Transverse colon (tissue), 4 donors: ENCODE measurements at regions of chr12 and their contacts with region 1.

Region 1: GRCh38 chr12:48851883-48852733 is at the start of gene DDX23:
- DNase-seq: peak; percentile 95
- H3K4me3 ChIP-seq: peak within 1 kb of the TSS; percentile 71 to 98 (median 76)
- H3K27ac ChIP-seq: peak within 1 kb of the TSS; percentile 80 to 95 (median 88)
- H3K4me1 ChIP-seq: peaks cover 10 to 27% (median 19%) of the 10 kb centered on the region in 4 donors
- H3K27me3 ChIP-seq: no peaks in the 10 kb centered on the region
- CTCF ChIP-seq: no peak
- EP300 ChIP-seq: peak; percentile 88
- POLR2A ChIP-seq: peak; percentile 68
- total RNA-seq, gene DDX23: 82.9 to 143 (median 83.9) TPM

Region 2: GRCh38 chr12:48556631-48557030 is 295.5 kb before region 1 on chr12:
- in situ Hi-C with region 1: no loop called
- intact Hi-C with region 1: no loop called
- DNase-seq: no peak
- H3K4me3 ChIP-seq: no peak overlapping the region
- H3K27ac ChIP-seq: no peak overlapping the region
- H3K4me1 ChIP-seq: no peaks in the 10 kb centered on the region
- H3K27me3 ChIP-seq: no peaks in the 10 kb centered on the region
- CTCF ChIP-seq: no peak
- EP300 ChIP-seq: no peak
- POLR2A ChIP-seq: no peak

Region 3: DNA sequence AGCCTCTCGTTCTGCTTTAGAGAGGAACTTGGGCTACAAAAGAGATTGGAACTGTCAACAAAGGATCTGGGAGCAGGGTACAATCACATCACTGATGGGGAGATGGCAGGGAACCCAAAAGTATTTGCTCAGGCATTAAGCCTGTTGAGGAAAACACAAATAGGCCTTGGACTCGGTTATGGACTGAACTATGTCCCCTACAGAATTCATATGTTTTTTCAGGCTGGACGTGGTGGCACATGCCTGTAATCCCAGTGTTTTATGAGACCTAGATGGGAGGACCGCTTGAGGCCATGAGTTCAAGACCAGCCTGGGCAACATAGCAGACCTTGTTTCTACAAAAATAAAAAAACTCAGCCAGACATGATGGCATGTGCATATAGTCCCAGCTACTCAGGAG is 14.1 kb before region 1 on chr12:
- in situ Hi-C with region 1: no loop called
- intact Hi-C with region 1: no loop called
- DNase-seq: no peak
- H3K4me3 ChIP-seq: no peak overlapping the region
- H3K27ac ChIP-seq: no peak overlapping the region
- H3K4me1 ChIP-seq: no peaks in the 10 kb centered on the region
- H3K27me3 ChIP-seq: no peaks in the 10 kb centered on the region
- CTCF ChIP-seq: no peak
- EP300 ChIP-seq: no peak
- POLR2A ChIP-seq: no peak

Region 4: GRCh38 chr12:48936379-48936979 is 84.4 kb after region 1 on chr12:
- in situ Hi-C with region 1: no loop called
- intact Hi-C with region 1: loop called (anchors 10 kb)
- DNase-seq: peak; percentile 80
- H3K4me3 ChIP-seq: no peak overlapping the region
- H3K27ac ChIP-seq: no peak overlapping the region
- H3K4me1 ChIP-seq: no peaks in the 10 kb centered on the region
- H3K27me3 ChIP-seq: no peaks in the 10 kb centered on the region
- CTCF ChIP-seq: peak; percentile 82 to 92 (median 88)
- EP300 ChIP-seq: no peak
- POLR2A ChIP-seq: no peak